ENCODE measurements at regions of chr20 and their contacts with region 1.

Region 1: GRCh38 chr20:53708129-53708968 is 114.7 kb upstream of the ZNF217 start:
- DNase-seq: peak; percentile 66
- ATAC-seq: peak; percentile 81
- H3K4me3 Mint-ChIP-seq: peak overlapping the region; percentile 59
- H3K27ac Mint-ChIP-seq: peak overlapping the region; percentile 94
- H3K4me1 Mint-ChIP-seq: peaks cover 51% of the 10 kb centered on the region
- H3K27me3 Mint-ChIP-seq: no peaks in the 10 kb centered on the region

Region 2: GRCh38 chr20:53594068-53595017 is 114.0 kb before region 1 on chr20:
- CTCF ChIA-PET with region 1: interaction called, 4 read pairs
- POLR2A ChIA-PET with region 1: interaction called, 3 read pairs
- intact Hi-C with region 1: loop called (anchors 1 to 5 kb)
- DNase-seq: peak; percentile 99
- ATAC-seq: peak; percentile 62
- H3K4me3 Mint-ChIP-seq: peak overlapping the region; percentile 97
- H3K27ac Mint-ChIP-seq: peak overlapping the region; percentile 95
- H3K4me1 Mint-ChIP-seq: peaks cover 47% of the 10 kb centered on the region
- H3K27me3 Mint-ChIP-seq: no peaks in the 10 kb centered on the region

Region 3: GRCh38 chr20:53684971-53685797 is 23.2 kb before region 1 on chr20:
- CTCF ChIA-PET with region 1: interaction called, 5 read pairs
- POLR2A ChIA-PET with region 1: interaction called, 10 read pairs
- intact Hi-C with region 1: loop called in 1 of 2 experiments (anchors 1 kb)
- DNase-seq: no peak
- ATAC-seq: peak; percentile 7
- H3K4me3 Mint-ChIP-seq: no peak overlapping the region
- H3K27ac Mint-ChIP-seq: peak overlapping the region; percentile 56
- H3K4me1 Mint-ChIP-seq: peaks cover 26% of the 10 kb centered on the region
- H3K27me3 Mint-ChIP-seq: no peaks in the 10 kb centered on the region

Region 4: GRCh38 chr20:53731595-53731994 is 23.2 kb after region 1 on chr20:
- CTCF ChIA-PET with region 1: no interaction called
- POLR2A ChIA-PET with region 1: no interaction called
- intact Hi-C with region 1: no loop called
- DNase-seq: no peak
- ATAC-seq: no peak
- H3K4me3 Mint-ChIP-seq: no peak overlapping the region
- H3K27ac Mint-ChIP-seq: no peak overlapping the region
- H3K4me1 Mint-ChIP-seq: peaks cover 20% of the 10 kb centered on the region
- H3K27me3 Mint-ChIP-seq: no peaks in the 10 kb centered on the region

Region 5: DNA sequence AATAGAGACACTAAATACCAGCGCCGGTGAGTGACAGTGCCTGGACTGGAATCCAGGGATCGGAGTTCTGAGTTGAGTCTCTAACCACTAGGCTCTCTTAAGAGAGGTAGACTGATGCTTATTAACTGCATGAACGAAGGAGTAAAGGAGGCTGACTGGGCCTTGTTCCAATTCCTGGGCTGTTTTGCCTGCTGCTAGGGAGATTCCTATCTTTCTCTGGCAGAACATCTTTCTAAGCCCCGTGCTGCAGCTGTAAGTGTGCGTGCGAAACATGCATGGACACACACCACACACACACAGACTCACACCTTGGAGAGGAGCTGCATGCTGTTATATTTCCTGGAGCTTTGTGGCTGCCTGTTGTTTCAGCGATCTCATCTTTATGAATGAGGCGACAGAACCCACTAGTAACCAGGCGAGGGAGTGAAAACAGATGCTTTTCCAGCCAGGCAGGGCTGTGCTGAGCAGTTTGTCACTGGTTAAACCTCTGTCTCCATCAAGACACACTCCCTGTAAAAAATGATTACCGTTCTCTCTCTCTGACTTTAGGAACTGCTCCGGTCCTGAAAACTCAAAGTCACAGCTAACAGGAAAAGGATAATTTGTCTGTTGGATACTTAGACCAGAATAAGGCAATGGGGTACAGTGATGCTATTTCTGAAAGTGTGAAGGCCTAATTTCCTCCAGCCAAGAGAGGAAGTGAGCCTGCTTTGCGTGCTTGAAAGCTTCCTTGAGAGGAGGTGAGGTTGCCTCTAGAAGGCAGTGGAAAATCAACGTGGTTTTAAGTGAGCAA is 42.7 kb after region 1 on chr20:
- CTCF ChIA-PET with region 1: interaction called, 4 read pairs
- POLR2A ChIA-PET with region 1: interaction called, 3 read pairs
- intact Hi-C with region 1: loop called (anchors 1 kb)
- DNase-seq: peak; percentile 60
- ATAC-seq: peak; percentile 70
- H3K4me3 Mint-ChIP-seq: peak overlapping the region; percentile 22
- H3K27ac Mint-ChIP-seq: peak overlapping the region; percentile 96
- H3K4me1 Mint-ChIP-seq: peaks cover 73% of the 10 kb centered on the region
- H3K27me3 Mint-ChIP-seq: no peaks in the 10 kb centered on the region

Region 6: GRCh38 chr20:53869466-53870258 is 161.3 kb after region 1 on chr20:
- CTCF ChIA-PET with region 1: no interaction called
- POLR2A ChIA-PET with region 1: interaction called, 6 read pairs
- intact Hi-C with region 1: loop called (anchors 1 kb)
- DNase-seq: peak; percentile 83
- ATAC-seq: peak; percentile 84
- H3K4me3 Mint-ChIP-seq: peak overlapping the region; percentile 18
- H3K27ac Mint-ChIP-seq: peak overlapping the region; percentile 90
- H3K4me1 Mint-ChIP-seq: peaks cover 75% of the 10 kb centered on the region
- H3K27me3 Mint-ChIP-seq: no peaks in the 10 kb centered on the region